Aorta (tissue), 5 donors: ENCODE measurements at regions of chr16 and their contacts with region 1.

Region 1: DNA sequence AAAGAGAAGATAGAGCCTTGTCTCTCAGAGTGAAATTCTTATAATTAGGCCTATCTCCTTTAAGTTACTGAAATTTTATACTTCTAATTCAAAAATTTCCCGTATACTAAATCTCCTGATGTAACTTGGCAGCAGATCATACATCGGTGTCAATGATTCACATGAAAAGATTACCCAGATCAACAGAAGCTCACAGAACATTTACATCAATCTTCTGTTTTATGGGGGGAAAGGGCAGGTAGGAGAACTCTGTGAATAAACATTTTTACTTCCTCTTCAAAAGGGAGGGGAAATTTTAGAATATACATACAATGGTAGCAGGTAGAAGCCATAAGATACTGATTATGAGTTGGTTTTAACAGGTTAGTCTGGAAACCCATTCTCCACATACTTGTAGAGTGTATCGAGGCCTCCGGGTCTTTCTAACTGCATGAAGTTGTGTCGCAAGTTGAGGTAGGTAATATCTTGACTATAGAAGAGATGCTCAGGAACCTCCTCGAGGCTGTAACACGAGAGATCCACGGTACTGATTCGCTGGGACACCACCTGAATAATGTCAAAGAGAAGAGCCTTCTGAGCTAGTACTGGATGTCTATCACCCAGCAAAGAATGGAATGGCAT is 43.0 kb downstream of the PHLPP2 start:
- DNase-seq: no peak
- ATAC-seq: no peak
- H3K4me3 ChIP-seq: no peak overlapping the region
- H3K27ac ChIP-seq: no peak overlapping the region
- H3K4me1 ChIP-seq: no peaks in the 10 kb centered on the region
- H3K27me3 ChIP-seq: no peaks in the 10 kb centered on the region

Region 2: GRCh38 chr16:71461686-71462648 is 219.5 kb before region 1 on chr16 and contains the start of gene ZNF23:
- intact Hi-C with region 1: no loop called
- DNase-seq: peak; percentile 91 to 95
- ATAC-seq: peak; percentile 98
- H3K4me3 ChIP-seq: peak within 1 kb of the TSS; percentile 69 to 89
- H3K27ac ChIP-seq: peak within 1 kb of the TSS in 1 of 2 donors; percentile 30
- H3K4me1 ChIP-seq: no peaks in the 10 kb centered on the region
- H3K27me3 ChIP-seq: no peaks in the 10 kb centered on the region
- total RNA-seq, gene ZNF23: 10.0 to 11.7 TPM

Region 3: GRCh38 chr16:71746442-71747046 is 65.1 kb after region 1 on chr16:
- intact Hi-C with region 1: loop called (anchors 10 kb)
- DNase-seq: no peak
- ATAC-seq: no peak
- H3K4me3 ChIP-seq: no peak overlapping the region
- H3K27ac ChIP-seq: no peak overlapping the region
- H3K4me1 ChIP-seq: no peaks in the 10 kb centered on the region
- H3K27me3 ChIP-seq: no peaks in the 10 kb centered on the region

Region 4: DNA sequence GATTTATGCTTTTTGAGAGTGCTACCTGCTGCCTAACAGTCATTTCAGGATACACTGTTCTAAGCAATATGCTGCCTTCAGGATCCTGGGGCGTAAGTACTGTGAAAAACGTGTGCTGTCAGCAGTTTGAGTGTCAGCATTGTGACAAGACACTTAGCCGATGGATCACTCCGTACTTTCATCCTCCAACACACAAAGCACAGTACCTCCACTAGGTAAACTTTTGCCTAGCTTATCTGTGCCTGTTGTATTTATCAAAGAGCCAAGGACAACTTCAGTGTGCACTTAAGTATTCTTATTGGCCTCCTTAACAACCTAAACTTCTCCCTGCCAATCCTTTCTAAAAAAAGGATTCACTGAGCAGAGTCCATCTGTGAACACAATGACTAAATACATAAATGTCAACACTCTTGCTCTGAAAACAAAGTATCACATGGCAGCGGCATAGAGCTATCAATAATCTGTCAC is 76.9 kb after region 1 on chr16:
- intact Hi-C with region 1: loop called in 1 of 2 experiments (anchors 10 kb)
- DNase-seq: no peak
- ATAC-seq: no peak
- H3K4me3 ChIP-seq: no peak overlapping the region
- H3K27ac ChIP-seq: no peak overlapping the region
- H3K4me1 ChIP-seq: no peaks in the 10 kb centered on the region
- H3K27me3 ChIP-seq: no peaks in the 10 kb centered on the region